ENCODE measurements at regions of chr15 and their contacts with region 1.

Region 1: GRCh38 chr15:90829942-90830440 is 38.4 kb upstream of the FURIN start:
- DNase-seq: peak; percentile 94
- H3K4me3 Mint-ChIP-seq: peak overlapping the region; percentile 80
- H3K27ac Mint-ChIP-seq: peak overlapping the region; percentile 98
- H3K4me1 Mint-ChIP-seq: peaks cover 55% of the 10 kb centered on the region
- H3K27me3 Mint-ChIP-seq: no peaks in the 10 kb centered on the region

Region 2: DNA sequence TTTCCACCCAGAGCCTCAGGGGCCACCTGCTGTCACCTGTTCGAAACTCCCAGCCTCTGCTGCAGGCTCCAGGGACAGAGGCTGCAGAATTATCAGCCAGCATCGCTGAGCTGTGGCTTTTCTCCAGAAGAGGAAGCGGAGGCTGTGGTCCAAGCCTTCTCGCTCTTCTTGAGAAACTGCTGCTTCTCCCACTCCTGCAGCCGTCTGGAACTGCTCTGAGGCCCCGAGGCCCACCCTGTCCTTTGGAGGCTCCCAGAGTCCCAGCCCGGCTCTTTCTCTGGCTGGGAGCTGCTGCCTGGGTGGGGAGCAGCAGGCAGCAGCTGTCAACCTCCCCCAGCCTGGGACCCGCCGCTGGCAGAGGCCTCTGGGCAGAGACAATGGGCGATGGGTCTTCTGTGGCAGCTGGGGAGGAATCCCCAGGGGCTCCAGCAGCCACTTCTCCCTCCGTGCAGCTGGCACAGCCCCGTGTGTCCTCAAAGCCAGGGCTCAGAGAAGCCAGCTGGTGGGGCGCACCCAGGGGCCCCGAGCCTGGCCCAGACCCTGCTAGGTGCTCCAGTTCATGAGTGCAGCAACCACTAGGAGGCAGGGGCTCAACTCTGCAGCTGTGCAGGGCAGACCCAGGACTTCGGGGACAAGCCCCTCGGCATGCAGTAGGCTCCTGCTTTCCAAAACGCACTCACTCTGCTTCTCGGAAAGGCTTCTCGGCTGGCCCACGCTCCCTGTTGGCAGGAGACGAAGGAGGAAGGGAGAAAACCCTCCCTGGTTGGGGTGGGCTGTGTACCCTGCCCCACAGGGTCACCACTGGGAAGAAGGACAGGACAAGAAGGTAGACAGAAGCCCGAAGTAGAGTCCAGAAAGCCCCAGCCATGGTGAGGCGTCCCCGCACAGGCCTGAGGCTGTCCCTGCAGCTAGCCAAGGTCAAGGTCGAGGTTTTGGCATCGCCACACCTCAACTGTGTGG is 11.5 kb before region 1 on chr15:
- intact Hi-C with region 1: loop called (anchors 1 kb)
- DNase-seq: peak; percentile 86
- H3K4me3 Mint-ChIP-seq: peak overlapping the region; percentile 80
- H3K27ac Mint-ChIP-seq: peak overlapping the region; percentile 99
- H3K4me1 Mint-ChIP-seq: peaks cover 69% of the 10 kb centered on the region
- H3K27me3 Mint-ChIP-seq: no peaks in the 10 kb centered on the region

Region 3: DNA sequence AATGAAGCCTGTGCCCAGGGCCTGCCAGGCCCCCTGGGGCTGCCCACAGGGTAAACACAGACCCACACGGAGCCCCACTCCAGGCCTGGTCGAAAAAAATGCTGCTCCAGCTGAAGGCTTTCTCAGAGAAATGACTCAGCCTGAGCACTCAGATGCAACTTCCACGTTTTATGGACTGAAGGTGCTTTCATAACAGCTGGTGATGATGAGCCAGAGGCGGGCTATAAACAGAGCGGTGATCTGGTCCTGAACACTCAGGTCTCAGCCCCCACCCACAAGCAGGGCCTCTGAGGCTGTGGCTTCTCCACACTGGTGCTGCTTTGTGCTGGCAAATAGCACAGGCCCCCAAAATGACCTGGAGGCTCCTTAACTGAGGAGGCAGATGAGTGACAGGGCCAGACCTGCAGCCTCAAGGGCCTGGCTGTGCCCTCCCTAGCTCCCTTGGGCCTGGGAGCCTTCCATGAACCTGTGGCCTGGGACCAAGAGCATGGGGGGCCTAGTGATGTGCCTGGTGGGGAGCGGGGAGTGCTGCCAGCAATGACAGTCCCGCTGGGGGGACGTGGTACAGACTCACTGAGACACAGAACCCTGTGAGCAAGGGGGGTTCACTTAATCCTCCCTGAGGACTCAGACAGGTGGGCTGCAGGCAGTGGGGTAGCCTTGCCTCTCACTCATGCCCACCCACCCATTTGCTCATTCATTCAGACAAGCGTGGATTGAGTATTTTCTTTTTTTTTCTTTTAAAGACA is 15.4 kb after region 1 on chr15:
- intact Hi-C with region 1: loop called (anchors 2 kb)
- DNase-seq: peak; percentile 87
- H3K4me3 Mint-ChIP-seq: peak overlapping the region; percentile 52
- H3K27ac Mint-ChIP-seq: peak overlapping the region; percentile 89
- H3K4me1 Mint-ChIP-seq: peaks cover 42% of the 10 kb centered on the region
- H3K27me3 Mint-ChIP-seq: no peaks in the 10 kb centered on the region

Region 4: DNA sequence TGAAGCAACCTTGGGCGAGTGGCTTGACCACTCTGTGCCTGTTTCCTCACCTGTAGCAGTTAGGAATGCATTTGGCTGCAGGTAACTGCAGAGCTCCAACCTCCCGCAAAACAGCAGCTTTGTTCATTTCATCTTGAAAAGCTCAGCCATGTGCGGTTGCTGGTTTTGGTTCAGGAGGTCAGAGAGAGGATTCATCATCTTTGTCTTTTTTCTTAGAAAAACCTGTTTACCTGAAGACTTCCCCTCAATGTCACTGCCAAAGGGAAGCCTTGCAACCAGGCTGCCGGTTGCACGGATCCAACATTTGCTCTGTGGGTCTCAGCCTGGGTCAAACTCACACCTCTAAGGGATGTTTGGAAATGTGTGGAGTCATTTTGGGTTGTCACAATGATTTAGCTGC is 21.9 kb after region 1 on chr15:
- intact Hi-C with region 1: loop called (anchors 1 kb)
- DNase-seq: peak; percentile 88
- H3K4me3 Mint-ChIP-seq: peak overlapping the region; percentile 72
- H3K27ac Mint-ChIP-seq: peak overlapping the region; percentile 94
- H3K4me1 Mint-ChIP-seq: peaks cover 64% of the 10 kb centered on the region
- H3K27me3 Mint-ChIP-seq: no peaks in the 10 kb centered on the region